GM12878 (cell line): ENCODE measurements at regions of chr20 and their contacts with region 1.

Region 1: DNA sequence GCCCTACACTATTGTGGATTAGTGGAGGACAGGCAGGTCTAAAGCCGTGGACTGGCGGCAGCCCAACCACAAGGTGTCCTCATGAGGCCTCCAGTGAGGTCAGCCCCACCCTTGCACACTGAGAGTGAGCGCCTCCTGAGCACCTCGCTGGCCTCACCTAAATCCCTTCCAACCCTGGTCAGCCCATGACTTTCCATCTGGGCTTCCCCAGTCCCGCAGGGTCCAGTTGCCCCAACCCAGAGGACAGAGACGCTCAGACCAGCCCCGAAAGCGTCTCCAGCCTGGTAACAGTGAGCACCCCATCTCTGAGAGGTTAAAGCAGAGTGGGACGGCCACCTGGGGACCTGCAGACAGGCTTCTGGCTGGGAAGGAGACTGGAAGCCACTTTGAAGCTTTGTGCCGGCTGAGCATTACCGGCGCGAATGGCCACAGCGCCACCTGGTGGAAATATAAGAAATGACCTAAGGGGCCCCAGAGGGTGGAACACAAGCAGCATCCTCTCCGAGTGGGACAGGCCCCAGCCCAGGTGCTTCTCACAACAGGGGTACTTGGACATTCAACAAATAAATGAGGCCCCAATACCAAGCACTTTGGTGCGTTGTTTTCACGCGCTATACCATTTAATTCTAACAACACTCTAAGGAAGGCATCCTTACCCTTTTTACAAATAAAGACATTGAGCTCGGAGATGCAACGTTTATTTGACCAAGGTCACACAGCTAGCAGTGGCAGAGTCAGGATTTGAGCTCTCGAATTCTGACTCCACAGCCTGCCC is 65.7 kb upstream of the TOP1 start:
- DNase-seq: no peak
- ATAC-seq: peak; percentile 93
- H3K4me3 ChIP-seq: no peak overlapping the region
- H3K27ac ChIP-seq: no peak overlapping the region
- H3K4me1 ChIP-seq: no peaks in the 10 kb centered on the region
- H3K27me3 ChIP-seq: no peaks in the 10 kb centered on the region; a peak in 1 of 4 replicates
- CTCF ChIP-seq: peak; percentile 76 to 92 (median 78)
- EP300 ChIP-seq: no peak
- POLR2A ChIP-seq: no peak
- RAD21 ChIP-seq: peak; percentile 91

Region 2: GRCh38 chr20:39885975-39886649 is 1076.8 kb before region 1 on chr20:
- CTCF ChIA-PET with region 1: interaction called, 3 read pairs
- POLR2A ChIA-PET with region 1: no interaction called
- RAD21 ChIA-PET with region 1: no interaction called
- SMC1A ChIA-PET with region 1: no interaction called
- in situ Hi-C with region 1: loop called (anchors 10 kb)
- intact Hi-C with region 1: loop called (anchors 2 kb)
- DNase-seq: no peak
- ATAC-seq: peak; percentile 88
- H3K4me3 ChIP-seq: no peak overlapping the region
- H3K27ac ChIP-seq: no peak overlapping the region
- H3K4me1 ChIP-seq: no peaks in the 10 kb centered on the region
- H3K27me3 ChIP-seq: no peaks in the 10 kb centered on the region
- CTCF ChIP-seq: peak; percentile 56 to 73 (median 70); a peak in 5 of 6 replicates
- EP300 ChIP-seq: no peak
- POLR2A ChIP-seq: no peak
- RAD21 ChIP-seq: peak; percentile 63

Region 3: DNA sequence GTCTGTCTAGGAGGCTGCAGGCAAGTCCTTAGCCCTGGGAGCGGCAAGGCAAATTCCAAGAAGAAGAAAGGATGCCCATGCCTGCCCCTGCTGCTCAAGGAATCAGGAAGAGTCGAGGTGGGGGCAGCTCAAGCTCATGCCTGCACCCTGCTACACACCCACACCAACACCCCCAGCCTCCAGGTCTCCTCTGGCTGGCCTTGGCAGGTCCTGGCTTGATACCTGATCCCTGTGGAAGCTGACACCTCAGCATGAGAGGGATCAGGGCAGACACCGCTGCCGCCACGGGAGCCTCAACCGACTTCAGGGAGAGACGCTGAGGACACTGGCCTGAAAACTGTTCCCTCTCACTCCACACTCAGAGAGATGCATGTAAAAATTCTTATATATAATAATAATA is 238.4 kb before region 1 on chr20:
- CTCF ChIA-PET with region 1: no interaction called
- POLR2A ChIA-PET with region 1: no interaction called
- RAD21 ChIA-PET with region 1: no interaction called
- SMC1A ChIA-PET with region 1: no interaction called
- in situ Hi-C with region 1: no loop called
- intact Hi-C with region 1: no loop called
- DNase-seq: no peak
- ATAC-seq: no peak
- H3K4me3 ChIP-seq: no peak overlapping the region
- H3K27ac ChIP-seq: no peak overlapping the region
- H3K4me1 ChIP-seq: no peaks in the 10 kb centered on the region
- H3K27me3 ChIP-seq: no peaks in the 10 kb centered on the region; a peak in 2 of 4 replicates
- CTCF ChIP-seq: no peak
- EP300 ChIP-seq: no peak
- POLR2A ChIP-seq: no peak
- RAD21 ChIP-seq: no peak

Region 4: DNA sequence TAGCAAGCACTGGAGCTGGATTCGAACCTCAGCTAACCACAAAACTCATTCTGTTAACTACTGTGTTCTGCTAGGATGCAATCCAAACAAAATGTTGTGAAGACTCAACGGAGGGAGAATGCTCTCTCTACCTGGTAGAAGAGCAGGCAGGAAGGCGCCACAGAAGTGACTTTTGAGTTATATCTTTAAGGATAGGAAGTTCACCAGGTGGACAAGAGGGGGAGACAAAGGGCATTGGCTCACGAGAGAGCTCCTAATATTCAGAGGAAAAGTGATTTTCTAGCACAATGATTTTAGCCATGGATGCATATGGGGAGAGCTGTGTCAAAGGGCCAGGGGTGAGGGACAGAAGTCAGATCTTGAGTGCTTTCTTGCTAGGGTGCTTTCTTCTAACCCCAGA is 165.5 kb before region 1 on chr20:
- CTCF ChIA-PET with region 1: interaction called, 26 read pairs
- POLR2A ChIA-PET with region 1: no interaction called
- RAD21 ChIA-PET with region 1: interaction called, 12 read pairs
- SMC1A ChIA-PET with region 1: interaction called, 6 read pairs
- in situ Hi-C with region 1: no loop called
- intact Hi-C with region 1: loop called (anchors 2 kb)
- DNase-seq: no peak
- ATAC-seq: peak; percentile 52; the same call in 1 of the 3 replicates
- H3K4me3 ChIP-seq: no peak overlapping the region
- H3K27ac ChIP-seq: no peak overlapping the region
- H3K4me1 ChIP-seq: no peaks in the 10 kb centered on the region
- H3K27me3 ChIP-seq: peaks cover 0 to 2% of the 10 kb centered on the region in 2 experiments; a peak in 1 of 4 replicates
- CTCF ChIP-seq: peak; percentile 46 to 62 (median 53)
- EP300 ChIP-seq: no peak
- POLR2A ChIP-seq: no peak
- RAD21 ChIP-seq: peak; percentile 40; the same call in 1 of the 2 replicates

Region 5: GRCh38 chr20:40980106-40980827 is 17.4 kb after region 1 on chr20:
- CTCF ChIA-PET with region 1: interaction called, 69 read pairs
- POLR2A ChIA-PET with region 1: no interaction called
- RAD21 ChIA-PET with region 1: interaction called, 39 read pairs
- SMC1A ChIA-PET with region 1: interaction called, 52 read pairs
- in situ Hi-C with region 1: no loop called
- intact Hi-C with region 1: no loop called
- DNase-seq: peak; percentile 83
- ATAC-seq: peak; percentile 86
- H3K4me3 ChIP-seq: peak overlapping the region; percentile 20; the same call in 1 of the 2 replicates
- H3K27ac ChIP-seq: peak overlapping the region; percentile 75
- H3K4me1 ChIP-seq: peaks cover 32% of the 10 kb centered on the region
- H3K27me3 ChIP-seq: no peaks in the 10 kb centered on the region
- CTCF ChIP-seq: no peak
- EP300 ChIP-seq: peak; percentile 6 to 48; a peak in 2 of 4 replicates
- POLR2A ChIP-seq: 0 out of 2 replicates have a peak, but pooled peaks have one; percentile 39
- RAD21 ChIP-seq: 0 out of 2 replicates have a peak, but pooled peaks have one; percentile 23

Region 6: GRCh38 chr20:41023544-41023943 is 60.6 kb after region 1 on chr20:
- CTCF ChIA-PET with region 1: no interaction called
- POLR2A ChIA-PET with region 1: no interaction called
- RAD21 ChIA-PET with region 1: no interaction called
- SMC1A ChIA-PET with region 1: no interaction called
- in situ Hi-C with region 1: no loop called
- intact Hi-C with region 1: no loop called
- DNase-seq: no peak
- ATAC-seq: no peak
- H3K4me3 ChIP-seq: no peak overlapping the region
- H3K27ac ChIP-seq: no peak overlapping the region
- H3K4me1 ChIP-seq: peaks cover 9% of the 10 kb centered on the region
- H3K27me3 ChIP-seq: no peaks in the 10 kb centered on the region
- CTCF ChIP-seq: no peak
- EP300 ChIP-seq: no peak
- POLR2A ChIP-seq: no peak
- RAD21 ChIP-seq: no peak

Region 7: DNA sequence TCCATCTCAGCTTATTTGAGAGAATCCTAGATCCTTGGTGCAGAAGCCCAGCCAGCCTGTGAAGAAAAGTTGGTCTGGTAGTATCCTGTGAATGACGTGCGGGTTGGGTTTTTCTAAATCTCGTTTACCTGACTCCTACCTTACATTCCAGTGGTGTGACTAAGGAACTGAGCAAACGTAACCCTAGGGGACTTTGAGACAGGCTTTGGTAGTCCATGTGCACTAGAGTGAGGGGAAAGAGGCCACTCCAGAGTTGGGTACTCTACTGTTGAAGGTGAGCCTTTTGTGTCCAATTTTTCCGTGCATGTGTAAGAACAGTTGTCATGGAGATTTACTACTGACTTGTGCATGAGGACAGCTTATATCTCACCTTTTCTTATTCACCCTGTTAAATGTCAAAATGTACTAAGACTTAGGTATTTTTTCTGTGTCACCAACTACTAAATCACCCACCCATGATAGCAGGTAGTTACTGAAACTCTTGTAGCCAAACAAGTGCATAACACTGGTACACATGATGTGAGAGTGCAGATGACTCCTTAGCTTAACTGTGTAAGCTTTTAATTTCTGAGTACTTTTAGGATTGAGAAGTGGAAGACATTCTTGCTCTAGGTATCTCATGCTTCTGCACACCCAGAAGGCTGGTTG is 148.1 kb after region 1 on chr20:
- CTCF ChIA-PET with region 1: interaction called, 13 read pairs
- POLR2A ChIA-PET with region 1: no interaction called
- RAD21 ChIA-PET with region 1: no interaction called
- SMC1A ChIA-PET with region 1: interaction called, 9 read pairs
- in situ Hi-C with region 1: no loop called
- intact Hi-C with region 1: no loop called
- DNase-seq: no peak
- ATAC-seq: peak; percentile 83
- H3K4me3 ChIP-seq: no peak overlapping the region
- H3K27ac ChIP-seq: no peak overlapping the region
- H3K4me1 ChIP-seq: peaks cover 5% of the 10 kb centered on the region; the same call in 1 of the 2 replicates
- H3K27me3 ChIP-seq: no peaks in the 10 kb centered on the region
- CTCF ChIP-seq: no peak
- EP300 ChIP-seq: no peak
- POLR2A ChIP-seq: no peak; the same call in 1 of the 2 replicates
- RAD21 ChIP-seq: no peak

Region 8: GRCh38 chr20:41339507-41340326 is 376.8 kb after region 1 on chr20:
- CTCF ChIA-PET with region 1: interaction called, 21 read pairs
- POLR2A ChIA-PET with region 1: no interaction called
- RAD21 ChIA-PET with region 1: interaction called, 6 read pairs
- SMC1A ChIA-PET with region 1: interaction called, 3 read pairs
- in situ Hi-C with region 1: loop called (anchors 5 kb)
- intact Hi-C with region 1: loop called (anchors 5 kb)
- DNase-seq: no peak
- ATAC-seq: peak; percentile 96
- H3K4me3 ChIP-seq: peak overlapping the region; percentile 68
- H3K27ac ChIP-seq: no peak overlapping the region
- H3K4me1 ChIP-seq: peaks cover 5% of the 10 kb centered on the region
- H3K27me3 ChIP-seq: no peaks in the 10 kb centered on the region
- CTCF ChIP-seq: peak; percentile 92 to 96 (median 95)
- EP300 ChIP-seq: no peak
- POLR2A ChIP-seq: no peak
- RAD21 ChIP-seq: peak; percentile 96